ENCODE measurements at regions of chr18 and their contacts with region 1.

Region 1: GRCh38 chr18:62714671-62715435 is 488 bp upstream of the PHLPP1 start:
- DNase-seq: peak; percentile 100
- ATAC-seq: peak; percentile 95 to 100 (median 99)
- H3K4me3 ChIP-seq: peak overlapping the region; percentile 54 to 83 (median 77)
- H3K27ac ChIP-seq: peak overlapping the region; percentile 89 to 96 (median 91)
- H3K4me1 ChIP-seq: peaks cover 3 to 35% (median 24%) of the 10 kb centered on the region in 9 donors
- H3K27me3 ChIP-seq: no peaks in the 10 kb centered on the region
- CTCF ChIP-seq: peak; percentile 70 to 94 (median 82)

Region 2: GRCh38 chr18:62522504-62523254 is 192.2 kb before region 1 on chr18 and contains the start of gene ZCCHC2:
- intact Hi-C with region 1: loop called in 1 of 10 experiments (anchors 10 kb)
- DNase-seq: peak; percentile 98 to 99
- ATAC-seq: peak; percentile 85 to 94 (median 93)
- H3K4me3 ChIP-seq: peak within 1 kb of the TSS; percentile 77 to 98 (median 92)
- H3K27ac ChIP-seq: peak within 1 kb of the TSS; percentile 96 to 100 (median 99)
- H3K4me1 ChIP-seq: peaks cover 0 to 37% (median 28%) of the 10 kb centered on the region in 9 donors
- H3K27me3 ChIP-seq: no peaks in the 10 kb centered on the region
- CTCF ChIP-seq: no peak
- total RNA-seq, gene ZCCHC2: 15.1 to 45.3 (median 20.1) TPM

Region 3: GRCh38 chr18:62610701-62611411 is 104.0 kb before region 1 on chr18:
- intact Hi-C with region 1: loop called in 2 of 10 experiments (anchors 10 kb)
- DNase-seq: peak in 1 of 2 donors; percentile 55
- ATAC-seq: peak; percentile 25 to 70 (median 48)
- H3K4me3 ChIP-seq: peak overlapping the region in 9 of 10 donors; percentile 12 to 51 (median 41)
- H3K27ac ChIP-seq: peak overlapping the region in 8 of 10 donors; percentile 2 to 88 (median 70)
- H3K4me1 ChIP-seq: peaks cover 8 to 34% (median 22%) of the 10 kb centered on the region in 9 donors
- H3K27me3 ChIP-seq: peaks cover 0 to 9% (median 0%) of the 10 kb centered on the region in 7 donors
- CTCF ChIP-seq: no peak

Region 4: GRCh38 chr18:62881509-62882016 is 166.7 kb after region 1 on chr18:
- intact Hi-C with region 1: loop called in 3 of 10 experiments (anchors 5 to 10 kb)
- DNase-seq: peak in 1 of 2 donors; percentile 9
- ATAC-seq: peak in 7 of 8 donors; percentile 29 to 88 (median 66)
- H3K4me3 ChIP-seq: no peak overlapping the region
- H3K27ac ChIP-seq: no peak overlapping the region
- H3K4me1 ChIP-seq: peaks cover 0 to 45% (median 24%) of the 10 kb centered on the region in 9 donors
- H3K27me3 ChIP-seq: no peaks in the 10 kb centered on the region
- CTCF ChIP-seq: no peak

Region 5: DNA sequence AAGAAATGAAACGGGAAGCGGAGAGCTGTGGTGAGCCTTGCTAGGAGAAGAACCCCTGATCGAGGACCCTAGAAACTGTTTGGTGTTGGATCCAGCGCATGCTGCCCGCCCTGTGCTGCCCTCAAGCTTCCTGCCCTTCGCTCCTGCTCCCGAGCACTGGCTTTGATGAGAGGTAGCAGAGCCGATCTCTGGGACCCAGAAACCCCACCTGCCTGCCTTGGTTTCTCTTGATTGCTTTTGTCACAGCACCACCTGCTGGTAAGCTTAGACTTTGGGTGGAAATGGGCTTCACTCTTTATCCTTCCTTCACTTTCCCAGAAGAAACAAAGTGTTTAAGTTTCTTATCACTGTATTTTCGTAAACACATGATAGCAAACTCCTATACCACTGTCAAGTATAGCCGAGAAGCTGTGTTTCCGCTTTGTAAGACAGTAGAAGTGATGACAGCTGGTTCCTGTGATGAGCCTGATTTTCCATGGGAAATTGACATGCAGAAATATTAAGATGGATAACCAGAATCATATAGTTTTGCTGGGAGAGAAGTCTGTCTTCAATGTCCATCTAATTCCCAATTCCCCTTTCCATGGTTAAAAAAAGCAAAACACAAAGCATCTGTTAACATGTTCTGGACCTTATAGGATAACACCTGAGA is 267.9 kb after region 1 on chr18:
- intact Hi-C with region 1: loop called (anchors 1 to 10 kb)
- DNase-seq: peak in 1 of 2 donors; percentile 61
- ATAC-seq: peak; percentile 63 to 87 (median 72)
- H3K4me3 ChIP-seq: peak overlapping the region in 8 of 10 donors; percentile 6 to 53 (median 42)
- H3K27ac ChIP-seq: no peak overlapping the region
- H3K4me1 ChIP-seq: peaks cover 0 to 20% (median 4%) of the 10 kb centered on the region in 9 donors
- H3K27me3 ChIP-seq: no peaks in the 10 kb centered on the region
- CTCF ChIP-seq: peak; percentile 43 to 88 (median 83)

Region 6: GRCh38 chr18:63422087-63422809 is 707.4 kb after region 1 on chr18 and contains the start of gene VPS4B:
- intact Hi-C with region 1: loop called in 2 of 10 experiments (anchors 5 to 10 kb)
- DNase-seq: peak; percentile 99 to 100
- ATAC-seq: peak; percentile 99
- H3K4me3 ChIP-seq: peak within 1 kb of the TSS; percentile 65 to 97 (median 86)
- H3K27ac ChIP-seq: peak within 1 kb of the TSS; percentile 92 to 99 (median 94)
- H3K4me1 ChIP-seq: peaks cover 5 to 47% (median 24%) of the 10 kb centered on the region in 9 donors
- H3K27me3 ChIP-seq: no peaks in the 10 kb centered on the region
- CTCF ChIP-seq: no peak
- total RNA-seq, gene VPS4B: 19.7 to 39.6 (median 22.8) TPM